CD8-positive, alpha-beta T cell (primary cell): ENCODE measurements at regions of chr9 and their contacts with region 1.

Region 1: GRCh38 chr9:133375724-133376654 is at the starts of genes STKLD1 and SURF4:
- DNase-seq: peak; percentile 88 to 97 (median 94)
- ATAC-seq: peak; percentile 74
- H3K4me3 ChIP-seq: peak within 1 kb of the TSS; percentile 67 to 76
- H3K4me3 Mint-ChIP-seq: peak within 1 kb of the TSS; percentile 92
- H3K27ac ChIP-seq: peak within 1 kb of the TSS; percentile 78 to 91
- H3K27ac Mint-ChIP-seq: peak within 1 kb of the TSS; percentile 95
- H3K4me1 ChIP-seq: peaks cover 40% of the 10 kb centered on the region
- H3K4me1 Mint-ChIP-seq: peaks cover 39% of the 10 kb centered on the region
- H3K27me3 ChIP-seq: no peaks in the 10 kb centered on the region
- H3K27me3 Mint-ChIP-seq: no peaks in the 10 kb centered on the region
- CTCF ChIP-seq: no peak
- total RNA-seq, gene STKLD1: 0.92 to 1.8 TPM
- total RNA-seq, gene SURF4: 228 TPM

Region 2: DNA sequence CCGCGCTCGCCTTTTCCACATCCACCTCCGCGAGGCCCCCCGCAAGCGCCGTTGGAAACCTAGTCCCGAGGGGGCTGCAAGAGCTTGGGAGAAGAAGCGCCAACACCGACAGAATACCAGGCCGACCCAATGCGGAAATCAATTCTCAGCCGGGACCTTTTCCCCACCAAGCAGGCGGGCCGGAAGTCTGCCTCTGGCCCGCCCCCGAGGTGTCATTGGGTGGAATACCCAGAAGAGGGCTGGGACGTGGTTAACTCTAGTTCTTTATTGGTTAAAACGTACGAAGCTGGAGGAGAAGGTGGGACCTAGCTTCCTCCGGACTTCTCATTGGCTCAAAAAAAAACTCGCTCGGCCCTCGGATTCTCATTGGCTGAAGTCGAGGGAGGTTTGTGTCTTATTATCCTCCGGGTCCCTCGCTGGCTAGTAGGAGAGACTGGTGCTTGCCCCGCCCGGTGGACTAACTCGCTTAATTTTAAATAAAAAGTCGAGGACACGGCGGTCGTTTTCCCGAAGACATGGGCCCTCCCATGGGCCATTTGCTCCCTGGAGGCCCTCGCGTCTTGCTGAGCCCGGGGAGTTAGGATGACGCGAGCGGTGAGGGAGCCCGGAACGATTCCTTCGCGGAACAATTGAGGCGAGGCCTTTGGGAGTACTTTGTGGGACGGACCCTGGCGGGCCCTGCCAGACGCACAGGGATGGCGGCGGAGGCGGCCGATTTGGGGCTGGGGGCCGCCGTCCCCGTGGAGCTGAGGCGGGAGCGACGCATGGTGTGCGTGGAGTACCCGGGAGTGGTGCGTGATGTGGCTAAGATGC is 345.5 kb before region 1 on chr9 and contains the start of gene GTF3C5:
- CTCF ChIA-PET with region 1: no interaction called
- POLR2A ChIA-PET with region 1: interaction called, 5 read pairs
- intact Hi-C with region 1: loop called in 1 of 2 experiments (anchors 1 kb)
- DNase-seq: peak; percentile 80 to 98 (median 91)
- ATAC-seq: peak; percentile 97
- H3K4me3 ChIP-seq: peak within 1 kb of the TSS; percentile 60 to 96
- H3K4me3 Mint-ChIP-seq: peak within 1 kb of the TSS; percentile 99
- H3K27ac ChIP-seq: peak within 1 kb of the TSS; percentile 75 to 94
- H3K27ac Mint-ChIP-seq: peak within 1 kb of the TSS; percentile 98
- H3K4me1 ChIP-seq: peaks cover 27% of the 10 kb centered on the region
- H3K4me1 Mint-ChIP-seq: peaks cover 54% of the 10 kb centered on the region
- H3K27me3 ChIP-seq: no peaks in the 10 kb centered on the region
- H3K27me3 Mint-ChIP-seq: no peaks in the 10 kb centered on the region
- CTCF ChIP-seq: no peak
- total RNA-seq, gene GTF3C5: 54.1 to 58.7 TPM

Region 3: GRCh38 chr9:133335878-133336811 is 39.8 kb before region 1 on chr9 and contains the start of gene SURF6:
- CTCF ChIA-PET with region 1: interaction called, 12 read pairs
- POLR2A ChIA-PET with region 1: interaction called, 8 read pairs
- intact Hi-C with region 1: loop called (anchors 1 kb)
- DNase-seq: peak; percentile 81 to 97 (median 93)
- ATAC-seq: peak; percentile 94
- H3K4me3 ChIP-seq: peak within 1 kb of the TSS; percentile 67 to 88
- H3K4me3 Mint-ChIP-seq: peak within 1 kb of the TSS; percentile 96
- H3K27ac ChIP-seq: peak within 1 kb of the TSS; percentile 71 to 73
- H3K27ac Mint-ChIP-seq: peak within 1 kb of the TSS; percentile 95
- H3K4me1 ChIP-seq: peaks cover 41% of the 10 kb centered on the region
- H3K4me1 Mint-ChIP-seq: peaks cover 50% of the 10 kb centered on the region
- H3K27me3 ChIP-seq: no peaks in the 10 kb centered on the region
- H3K27me3 Mint-ChIP-seq: no peaks in the 10 kb centered on the region
- CTCF ChIP-seq: no peak
- total RNA-seq, gene SURF6: 17.0 to 17.8 TPM

Region 4: GRCh38 chr9:133356391-133357091 is 19.4 kb before region 1 on chr9 and contains the starts of genes SURF1 and SURF2:
- CTCF ChIA-PET with region 1: interaction called, 25 read pairs
- POLR2A ChIA-PET with region 1: interaction called, 34 read pairs
- intact Hi-C with region 1: loop called (anchors 1 kb)
- DNase-seq: peak; percentile 81 to 93 (median 91)
- ATAC-seq: peak; percentile 93
- H3K4me3 ChIP-seq: peak within 1 kb of the TSS; percentile 78 to 86
- H3K4me3 Mint-ChIP-seq: peak within 1 kb of the TSS; percentile 87
- H3K27ac ChIP-seq: peak within 1 kb of the TSS; percentile 72 to 77
- H3K27ac Mint-ChIP-seq: peak within 1 kb of the TSS; percentile 93
- H3K4me1 ChIP-seq: peaks cover 30% of the 10 kb centered on the region
- H3K4me1 Mint-ChIP-seq: peaks cover 36% of the 10 kb centered on the region
- H3K27me3 ChIP-seq: no peaks in the 10 kb centered on the region
- H3K27me3 Mint-ChIP-seq: no peaks in the 10 kb centered on the region
- CTCF ChIP-seq: no peak
- total RNA-seq, gene SURF1: 34.3 to 36.8 TPM
- total RNA-seq, gene SURF2: 18.6 to 21.9 TPM

Region 5: GRCh38 chr9:133459476-133460404 is 83.8 kb after region 1 on chr9 and contains the start of gene CACFD1:
- CTCF ChIA-PET with region 1: no interaction called
- POLR2A ChIA-PET with region 1: interaction called, 3 read pairs
- intact Hi-C with region 1: loop called in 1 of 2 experiments (anchors 1 kb)
- DNase-seq: peak; percentile 77 to 96 (median 93)
- ATAC-seq: peak; percentile 80
- H3K4me3 ChIP-seq: peak within 1 kb of the TSS; percentile 71 to 76
- H3K4me3 Mint-ChIP-seq: peak within 1 kb of the TSS; percentile 87
- H3K27ac ChIP-seq: peak within 1 kb of the TSS; percentile 74 to 80
- H3K27ac Mint-ChIP-seq: peak within 1 kb of the TSS; percentile 97
- H3K4me1 ChIP-seq: peaks cover 14% of the 10 kb centered on the region
- H3K4me1 Mint-ChIP-seq: peaks cover 12% of the 10 kb centered on the region
- H3K27me3 ChIP-seq: no peaks in the 10 kb centered on the region
- H3K27me3 Mint-ChIP-seq: no peaks in the 10 kb centered on the region
- CTCF ChIP-seq: no peak
- total RNA-seq, gene CACFD1: 7.4 to 9.7 TPM